ENCODE measurements at regions of chr9 and their contacts with region 1.

Region 1: GRCh38 chr9:27094640-27095298 is 14.3 kb upstream of the TEK start:
- DNase-seq: no peak
- ATAC-seq: no peak
- H3K4me3 Mint-ChIP-seq: no peak overlapping the region
- H3K27ac Mint-ChIP-seq: no peak overlapping the region
- H3K4me1 Mint-ChIP-seq: peaks cover 2% of the 10 kb centered on the region
- H3K27me3 Mint-ChIP-seq: peaks cover 20% of the 10 kb centered on the region
- CTCF ChIP-seq: no peak

Region 2: GRCh38 chr9:27154908-27155307 is 60.1 kb after region 1 on chr9:
- CTCF ChIA-PET with region 1: no interaction called
- POLR2A ChIA-PET with region 1: no interaction called
- intact Hi-C with region 1: loop called (anchors 10 kb)
- DNase-seq: no peak
- ATAC-seq: no peak
- H3K4me3 Mint-ChIP-seq: no peak overlapping the region
- H3K27ac Mint-ChIP-seq: no peak overlapping the region
- H3K4me1 Mint-ChIP-seq: no peaks in the 10 kb centered on the region
- H3K27me3 Mint-ChIP-seq: no peaks in the 10 kb centered on the region
- CTCF ChIP-seq: no peak